PC-3 (cell line): ENCODE measurements at regions of chr15 and their contacts with region 1.

Region 1: DNA sequence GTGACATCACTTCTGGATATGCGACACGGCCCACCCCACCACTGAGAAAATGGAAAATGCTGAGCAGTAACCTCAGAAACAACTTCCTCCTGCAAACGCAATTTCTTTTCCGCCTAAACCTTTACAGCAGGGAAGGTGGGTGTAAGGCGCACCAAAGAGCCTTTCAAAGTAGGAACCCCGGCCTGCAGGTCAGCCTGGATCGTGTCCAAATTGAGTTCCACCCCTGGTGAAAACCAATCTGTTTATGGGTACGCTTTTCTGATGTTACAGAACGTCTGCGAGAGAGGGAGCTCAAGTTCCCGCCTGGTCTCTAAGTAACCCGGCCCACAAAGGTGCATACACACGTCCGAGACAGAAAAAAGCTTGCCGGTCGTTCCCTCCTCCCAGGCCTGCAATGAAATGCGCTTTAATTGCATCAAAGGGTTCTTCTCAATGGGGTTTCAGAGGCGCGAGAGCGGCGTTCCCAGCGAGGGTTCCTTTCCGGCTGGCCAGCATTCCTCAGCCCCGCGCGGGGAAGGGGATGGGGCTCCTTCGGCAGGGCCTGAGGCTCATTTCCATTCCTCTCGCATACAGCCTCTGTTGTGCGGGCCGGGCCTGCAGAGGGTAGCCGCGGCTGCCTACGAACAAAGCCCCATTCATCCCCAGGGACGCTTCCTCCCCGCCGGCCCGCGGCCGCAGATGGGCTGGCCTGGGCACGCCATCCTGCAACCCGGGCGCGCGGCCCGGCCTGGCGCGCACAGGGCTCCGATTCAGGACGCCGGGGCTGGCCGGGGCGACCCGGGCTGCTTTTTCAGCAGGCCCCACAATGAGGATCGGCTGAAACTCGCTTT is 138.1 kb downstream of the TMCO5A start:
- DNase-seq: peak; percentile 82
- ATAC-seq: peak; percentile 55
- H3K4me3 ChIP-seq: peak overlapping the region; percentile 68
- H3K27ac ChIP-seq: peak overlapping the region; percentile 91
- H3K4me1 ChIP-seq: peaks cover 65% of the 10 kb centered on the region
- H3K27me3 ChIP-seq: no peaks in the 10 kb centered on the region
- CTCF ChIP-seq: peak; percentile 59

Region 2: DNA sequence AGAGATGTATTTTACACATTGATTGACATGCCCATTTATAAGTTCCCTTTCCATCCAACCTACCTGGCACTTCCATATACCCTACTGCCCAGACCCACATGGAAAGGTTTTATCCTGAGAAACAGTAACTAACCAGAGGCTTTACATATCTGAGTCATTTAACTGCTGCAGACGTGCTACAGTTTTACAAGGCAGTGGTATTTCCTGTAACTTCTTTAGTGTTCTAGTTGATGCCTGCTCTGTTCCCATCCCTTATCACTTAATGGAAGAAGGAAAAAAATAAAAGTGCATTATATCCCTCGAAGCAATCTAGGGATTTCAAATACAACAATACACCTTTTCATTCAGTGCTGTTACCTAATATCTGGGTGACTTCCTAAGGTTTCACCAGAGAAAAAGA is 31.0 kb before region 1 on chr15:
- CTCF ChIA-PET with region 1: no interaction called
- POLR2A ChIA-PET with region 1: interaction called, 9 read pairs
- intact Hi-C with region 1: loop called (anchors 1 kb)
- DNase-seq: peak; percentile 78
- ATAC-seq: peak; percentile 70
- H3K4me3 ChIP-seq: no peak overlapping the region
- H3K27ac ChIP-seq: peak overlapping the region; percentile 72
- H3K4me1 ChIP-seq: peaks cover 58% of the 10 kb centered on the region
- H3K27me3 ChIP-seq: no peaks in the 10 kb centered on the region
- CTCF ChIP-seq: no peak

Region 3: DNA sequence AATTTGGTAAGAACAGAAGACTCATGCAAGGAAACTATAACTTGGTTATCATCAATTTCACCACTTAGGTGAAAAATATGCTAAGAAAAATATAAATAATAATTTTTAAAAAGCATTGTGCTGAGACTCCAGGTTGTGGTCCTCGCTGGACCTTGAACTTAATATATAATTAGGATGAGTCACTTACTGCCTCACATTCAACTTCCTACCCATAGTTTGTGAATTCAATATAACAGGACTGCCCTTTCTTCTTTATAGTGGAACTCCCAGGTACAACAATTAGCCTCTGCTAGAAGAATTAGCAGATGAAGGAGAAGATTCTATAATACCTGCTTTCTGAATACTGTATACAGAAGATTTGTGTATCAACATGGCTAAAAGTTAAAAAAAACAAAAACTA is 31.0 kb after region 1 on chr15:
- CTCF ChIA-PET with region 1: no interaction called
- POLR2A ChIA-PET with region 1: no interaction called
- intact Hi-C with region 1: no loop called
- DNase-seq: no peak
- ATAC-seq: peak; percentile 74
- H3K4me3 ChIP-seq: no peak overlapping the region
- H3K27ac ChIP-seq: no peak overlapping the region
- H3K4me1 ChIP-seq: no peaks in the 10 kb centered on the region; the same call in 1 of the 2 replicates
- H3K27me3 ChIP-seq: no peaks in the 10 kb centered on the region
- CTCF ChIP-seq: no peak

Region 4: GRCh38 chr15:38195191-38195901 is 122.8 kb after region 1 on chr15:
- CTCF ChIA-PET with region 1: no interaction called
- POLR2A ChIA-PET with region 1: interaction called, 3 read pairs
- intact Hi-C with region 1: loop called (anchors 1 kb)
- DNase-seq: peak; percentile 78
- ATAC-seq: peak; percentile 82
- H3K4me3 ChIP-seq: no peak overlapping the region
- H3K27ac ChIP-seq: peak overlapping the region; percentile 84
- H3K4me1 ChIP-seq: peaks cover 42% of the 10 kb centered on the region
- H3K27me3 ChIP-seq: no peaks in the 10 kb centered on the region
- CTCF ChIP-seq: no peak

Region 5: GRCh38 chr15:38226608-38227266 is 154.2 kb after region 1 on chr15:
- CTCF ChIA-PET with region 1: no interaction called
- POLR2A ChIA-PET with region 1: no interaction called
- intact Hi-C with region 1: no loop called
- DNase-seq: peak; percentile 96
- ATAC-seq: peak; percentile 72
- H3K4me3 ChIP-seq: no peak overlapping the region
- H3K27ac ChIP-seq: peak overlapping the region; percentile 58
- H3K4me1 ChIP-seq: peaks cover 35% of the 10 kb centered on the region
- H3K27me3 ChIP-seq: no peaks in the 10 kb centered on the region
- CTCF ChIP-seq: no peak

Region 6: DNA sequence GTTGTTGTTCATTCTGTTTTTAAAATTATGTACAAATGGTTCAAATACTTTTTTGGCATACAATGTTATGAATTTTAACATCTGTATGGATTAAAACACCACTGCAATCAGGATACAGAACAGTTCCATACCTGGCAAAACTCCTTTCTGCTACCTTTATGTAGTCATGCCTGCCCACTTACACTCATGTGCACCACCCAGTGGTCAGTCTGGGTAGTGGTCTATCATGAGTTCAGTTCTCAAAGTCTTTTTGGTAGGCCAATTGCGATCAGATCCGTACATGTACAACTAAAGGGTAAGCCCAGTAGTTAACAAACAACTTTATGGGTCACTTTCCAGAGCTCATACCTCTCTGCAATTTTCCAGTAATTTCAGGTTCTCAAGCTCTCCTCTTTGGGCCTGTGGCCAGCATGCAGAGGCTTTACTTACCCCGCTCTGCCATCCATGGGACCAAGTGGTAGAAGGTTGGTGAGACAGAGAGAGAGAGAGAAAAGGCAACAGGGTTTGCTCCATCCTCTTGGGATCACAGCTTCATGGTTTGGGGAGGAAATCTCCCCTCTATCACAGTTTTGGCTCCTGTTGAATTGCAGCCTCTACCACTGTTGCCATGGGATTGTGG is 317.5 kb after region 1 on chr15:
- CTCF ChIA-PET with region 1: no interaction called
- POLR2A ChIA-PET with region 1: interaction called, 17 read pairs
- intact Hi-C with region 1: no loop called
- DNase-seq: peak; percentile 81
- ATAC-seq: peak; percentile 93
- H3K4me3 ChIP-seq: no peak overlapping the region
- H3K27ac ChIP-seq: no peak overlapping the region
- H3K4me1 ChIP-seq: no peaks in the 10 kb centered on the region
- H3K27me3 ChIP-seq: no peaks in the 10 kb centered on the region
- CTCF ChIP-seq: peak; percentile 93